Left colon (tissue), 2 donors: ENCODE measurements at regions of chr3 and their contacts with region 1.

Region 1: DNA sequence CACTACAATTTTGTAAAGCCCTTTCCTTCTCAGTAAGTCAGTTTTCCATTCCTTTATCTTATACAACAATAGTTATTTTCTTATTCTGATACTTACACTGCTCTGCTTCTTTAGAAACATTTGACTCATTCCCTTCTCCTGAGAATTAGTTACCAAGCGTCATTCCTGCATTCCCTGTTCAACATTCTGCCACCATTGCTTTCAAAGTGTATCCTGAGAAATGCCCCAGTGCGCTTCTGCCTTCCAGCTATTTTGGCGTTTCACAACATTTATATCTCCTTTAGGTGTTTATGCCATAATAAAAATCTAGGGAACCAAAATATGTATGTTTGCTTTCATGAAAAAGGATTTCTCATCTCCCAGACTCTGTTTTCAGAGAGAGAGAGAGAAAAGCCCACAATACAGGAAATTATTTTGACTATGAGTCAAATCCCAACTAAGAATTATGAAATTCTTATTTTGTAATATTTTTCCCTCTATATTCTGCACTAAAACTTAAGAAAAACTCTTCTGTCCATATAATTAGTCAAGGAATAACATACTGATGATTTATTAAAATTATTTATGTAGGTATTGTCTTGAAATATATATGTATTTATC is 118.2 kb upstream of the RAP2B start:
- DNase-seq: no peak
- ATAC-seq: no peak

Region 2: GRCh38 chr3:153161138-153161713 is 117.4 kb after region 1 on chr3:
- intact Hi-C with region 1: loop called in 1 of 2 experiments (anchors 10 kb)
- DNase-seq: peak; percentile 89 to 98
- ATAC-seq: peak; percentile 66

Region 3: DNA sequence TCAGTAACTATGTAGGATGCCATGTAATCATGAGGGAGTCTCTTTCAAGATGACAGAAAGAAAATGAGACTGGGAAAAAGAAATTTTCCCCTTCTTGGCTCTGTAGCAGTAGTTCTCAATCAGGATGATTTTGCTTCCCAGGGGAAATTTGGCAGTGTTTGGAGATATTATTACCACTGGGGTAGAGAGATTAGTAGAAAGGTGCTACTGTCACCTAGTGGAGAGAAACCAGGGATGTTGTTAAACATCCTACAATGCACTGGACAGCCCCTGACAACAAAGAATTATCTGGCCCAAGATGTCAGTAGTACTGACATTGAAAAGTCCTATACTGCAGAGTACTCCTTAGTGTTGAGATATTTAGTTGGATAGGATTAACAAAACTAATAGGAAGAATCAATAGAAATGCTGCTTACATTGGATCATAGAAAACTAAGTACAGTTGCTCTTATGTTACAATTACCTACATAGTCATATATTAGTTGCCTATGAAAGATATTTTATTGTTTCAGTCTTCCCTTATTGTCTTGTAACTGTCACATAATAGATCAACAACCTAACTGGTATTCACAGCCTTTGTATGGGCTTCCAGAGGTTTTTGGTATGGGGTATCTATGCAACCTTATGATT is 551.5 kb after region 1 on chr3:
- intact Hi-C with region 1: loop called in 1 of 2 experiments (anchors 10 kb)
- DNase-seq: no peak
- ATAC-seq: peak; percentile 73

Region 4: GRCh38 chr3:153768561-153769469 is 725.0 kb after region 1 on chr3:
- intact Hi-C with region 1: loop called in 1 of 2 experiments (anchors 10 kb)
- DNase-seq: peak in 1 of 2 donors; percentile 25
- ATAC-seq: peak; percentile 99